ENCODE measurements at regions of chr9 and their contacts with region 1.

Region 1: DNA sequence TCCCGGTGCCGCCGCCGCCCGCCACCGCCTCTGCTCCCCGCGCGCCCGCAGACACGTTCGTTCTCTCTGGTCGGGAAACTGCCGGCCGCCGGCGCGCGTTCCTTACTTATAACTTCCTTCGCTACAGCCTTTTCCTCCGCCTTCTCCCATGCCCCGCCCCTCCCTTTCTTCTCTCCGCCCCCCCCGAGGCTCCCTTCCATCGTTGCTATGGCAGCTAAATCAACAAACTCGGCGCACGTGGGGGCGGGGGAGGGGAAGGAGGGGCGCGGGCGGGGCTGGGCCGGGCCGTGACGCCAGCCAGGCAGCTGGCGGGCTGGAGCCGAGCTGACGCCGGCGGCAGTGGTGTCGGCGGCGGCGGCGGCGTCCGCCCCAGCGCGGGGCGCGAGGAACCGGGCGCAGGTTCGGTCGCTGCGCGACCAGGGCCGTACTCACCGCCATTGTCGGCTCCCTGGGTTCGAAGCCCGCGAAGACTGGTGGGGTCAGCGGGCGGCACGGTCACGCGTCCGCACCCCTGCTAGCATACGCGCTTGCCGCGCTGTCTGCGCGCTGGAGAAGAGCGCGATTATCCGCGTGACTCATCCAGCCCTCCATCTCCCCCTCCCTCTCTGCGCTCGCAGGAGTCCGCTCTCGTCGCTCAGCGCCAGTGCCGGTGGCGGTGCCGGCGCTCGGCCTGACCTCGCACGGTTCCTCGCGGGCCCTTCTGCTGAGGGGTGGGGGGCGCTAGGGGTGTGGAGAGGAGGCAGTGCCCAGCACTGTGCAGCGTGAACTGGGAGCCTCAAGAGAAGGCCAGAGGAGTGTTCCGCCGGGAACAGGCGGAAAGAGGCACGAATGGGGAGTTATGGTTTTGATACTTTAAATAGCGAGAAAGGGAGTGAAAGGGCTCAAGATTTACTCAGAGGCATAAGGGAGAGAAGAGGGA is at the start of gene KLF4:
- DNase-seq: peak; percentile 72
- H3K4me3 ChIP-seq: peak within 1 kb of the TSS; percentile 78 to 98 (median 90)
- H3K27ac ChIP-seq: peak within 1 kb of the TSS; percentile 98 to 99 (median 98)
- H3K4me1 ChIP-seq: peaks cover 4 to 61% (median 14%) of the 10 kb centered on the region in 3 donors
- H3K27me3 ChIP-seq: peaks cover 0 to 18% (median 0%) of the 10 kb centered on the region in 4 donors
- CTCF ChIP-seq: peak in 1 of 6 experiments; percentile 4
- POLR2A ChIP-seq: peak in 2 of 4 donors; percentile 87 to 91
- total RNA-seq, gene KLF4: 72.0 to 157 (median 106) TPM

Region 2: DNA sequence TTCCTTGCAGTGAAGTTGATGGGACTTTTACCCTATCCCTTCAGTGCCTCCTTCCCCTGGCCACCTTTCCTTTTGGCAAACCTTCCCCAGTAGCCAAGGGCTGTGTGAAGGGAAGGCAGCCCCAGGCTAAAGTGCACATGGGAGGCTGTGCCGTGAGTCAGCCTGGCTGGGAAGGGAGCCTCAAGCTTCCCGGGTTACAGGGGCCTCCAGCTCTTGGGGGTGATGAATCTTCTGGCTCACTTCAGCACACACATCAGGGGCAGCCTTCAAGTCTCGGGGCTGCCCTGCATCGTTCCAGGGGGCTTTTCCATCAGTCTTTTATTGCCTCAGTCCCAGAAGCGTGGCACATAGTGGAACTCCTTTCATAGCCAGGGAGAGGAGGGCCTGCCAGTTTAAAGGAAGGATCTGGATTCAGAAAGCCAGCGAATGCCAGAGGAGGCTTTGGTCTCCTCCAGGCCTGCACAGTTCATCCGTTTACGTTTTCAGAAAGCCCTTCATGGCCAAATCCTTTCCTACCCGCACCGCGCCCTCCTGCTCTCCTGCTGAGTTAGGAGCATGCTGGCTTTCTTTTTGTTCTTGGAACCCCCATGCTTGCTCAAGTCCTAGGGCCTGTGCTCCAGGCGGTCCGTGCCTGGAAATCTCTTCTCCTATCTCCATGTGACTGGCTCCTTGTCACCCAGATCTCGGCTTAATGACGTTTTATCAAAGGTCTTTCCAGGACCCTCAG is 134.5 kb after region 1 on chr9:
- intact Hi-C with region 1: no loop called
- DNase-seq: no peak
- H3K4me3 ChIP-seq: no peak overlapping the region
- H3K27ac ChIP-seq: peak overlapping the region; percentile 24 to 72 (median 52)
- H3K4me1 ChIP-seq: peaks cover 0 to 18% (median 0%) of the 10 kb centered on the region in 3 donors
- H3K27me3 ChIP-seq: no peaks in the 10 kb centered on the region
- CTCF ChIP-seq: no peak
- POLR2A ChIP-seq: no peak

Region 3: GRCh38 chr9:107637421-107638420 is 147.8 kb after region 1 on chr9:
- intact Hi-C with region 1: loop called (anchors 5 kb)
- DNase-seq: peak; percentile 40
- H3K4me3 ChIP-seq: peak overlapping the region; percentile 28 to 62 (median 48)
- H3K27ac ChIP-seq: peak overlapping the region; percentile 77 to 98 (median 90)
- H3K4me1 ChIP-seq: peaks cover 7 to 29% (median 21%) of the 10 kb centered on the region in 3 donors
- H3K27me3 ChIP-seq: peaks cover 0 to 8% (median 0%) of the 10 kb centered on the region in 4 donors
- CTCF ChIP-seq: peak in 4 of 6 experiments; percentile 7 to 29 (median 23)
- POLR2A ChIP-seq: peak in 2 of 4 donors; percentile 88 to 97

Region 4: GRCh38 chr9:107732781-107733522 is 243.0 kb after region 1 on chr9:
- intact Hi-C with region 1: loop called (anchors 10 kb)
- DNase-seq: no peak
- H3K4me3 ChIP-seq: peak overlapping the region in 3 of 4 donors; percentile 10 to 46 (median 20)
- H3K27ac ChIP-seq: peak overlapping the region; percentile 69 to 89 (median 85)
- H3K4me1 ChIP-seq: peaks cover 21 to 59% (median 35%) of the 10 kb centered on the region in 3 donors
- H3K27me3 ChIP-seq: no peaks in the 10 kb centered on the region
- CTCF ChIP-seq: no peak
- POLR2A ChIP-seq: no peak

Region 5: GRCh38 chr9:107751567-107752210 is 261.7 kb after region 1 on chr9:
- intact Hi-C with region 1: no loop called
- DNase-seq: no peak
- H3K4me3 ChIP-seq: no peak overlapping the region
- H3K27ac ChIP-seq: peak overlapping the region; percentile 58 to 93 (median 86)
- H3K4me1 ChIP-seq: peaks cover 26 to 56% (median 38%) of the 10 kb centered on the region in 3 donors
- H3K27me3 ChIP-seq: no peaks in the 10 kb centered on the region
- CTCF ChIP-seq: no peak
- POLR2A ChIP-seq: no peak

Region 6: DNA sequence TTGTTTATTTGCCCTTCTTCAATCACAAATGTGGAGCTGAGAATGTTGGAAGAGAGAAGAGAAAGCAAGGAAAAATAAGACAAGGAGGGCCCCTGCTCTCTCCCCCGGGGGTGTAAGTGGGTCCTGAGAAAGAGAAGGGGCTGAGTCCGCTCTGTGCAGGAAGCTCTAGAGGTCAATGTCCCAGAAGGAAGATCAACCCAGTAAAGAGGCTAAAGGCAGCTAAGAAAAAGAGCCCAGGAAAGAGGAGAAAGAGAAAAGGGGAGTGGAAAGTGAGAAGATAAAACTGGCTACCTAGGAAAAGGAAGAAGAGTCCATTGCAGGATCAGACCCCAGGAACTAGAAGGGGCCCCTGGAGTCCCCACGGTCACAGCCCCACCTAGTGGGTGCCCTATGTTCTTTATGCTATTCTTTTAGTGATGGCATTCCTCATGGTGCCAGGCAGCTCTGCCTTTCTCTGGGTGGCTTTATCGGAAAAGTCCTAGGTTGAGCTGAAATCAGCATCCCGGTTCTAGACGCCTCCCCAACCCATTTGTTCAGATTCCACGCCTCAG is 782.5 kb after region 1 on chr9:
- intact Hi-C with region 1: loop called (anchors 10 kb)
- DNase-seq: no peak
- H3K4me3 ChIP-seq: peak overlapping the region; percentile 13 to 41 (median 32)
- H3K27ac ChIP-seq: peak overlapping the region; percentile 51 to 86 (median 84)
- H3K4me1 ChIP-seq: peaks cover 0 to 30% (median 6%) of the 10 kb centered on the region in 3 donors
- H3K27me3 ChIP-seq: no peaks in the 10 kb centered on the region
- CTCF ChIP-seq: peak; percentile 34 to 74 (median 64)
- POLR2A ChIP-seq: no peak

Measured in esophagus squamous epithelium (tissue), 5 donors.